Sciatic nerve (tissue), 2 donors: ENCODE measurements at regions of chr2 and their contacts with region 1.

Region 1: DNA sequence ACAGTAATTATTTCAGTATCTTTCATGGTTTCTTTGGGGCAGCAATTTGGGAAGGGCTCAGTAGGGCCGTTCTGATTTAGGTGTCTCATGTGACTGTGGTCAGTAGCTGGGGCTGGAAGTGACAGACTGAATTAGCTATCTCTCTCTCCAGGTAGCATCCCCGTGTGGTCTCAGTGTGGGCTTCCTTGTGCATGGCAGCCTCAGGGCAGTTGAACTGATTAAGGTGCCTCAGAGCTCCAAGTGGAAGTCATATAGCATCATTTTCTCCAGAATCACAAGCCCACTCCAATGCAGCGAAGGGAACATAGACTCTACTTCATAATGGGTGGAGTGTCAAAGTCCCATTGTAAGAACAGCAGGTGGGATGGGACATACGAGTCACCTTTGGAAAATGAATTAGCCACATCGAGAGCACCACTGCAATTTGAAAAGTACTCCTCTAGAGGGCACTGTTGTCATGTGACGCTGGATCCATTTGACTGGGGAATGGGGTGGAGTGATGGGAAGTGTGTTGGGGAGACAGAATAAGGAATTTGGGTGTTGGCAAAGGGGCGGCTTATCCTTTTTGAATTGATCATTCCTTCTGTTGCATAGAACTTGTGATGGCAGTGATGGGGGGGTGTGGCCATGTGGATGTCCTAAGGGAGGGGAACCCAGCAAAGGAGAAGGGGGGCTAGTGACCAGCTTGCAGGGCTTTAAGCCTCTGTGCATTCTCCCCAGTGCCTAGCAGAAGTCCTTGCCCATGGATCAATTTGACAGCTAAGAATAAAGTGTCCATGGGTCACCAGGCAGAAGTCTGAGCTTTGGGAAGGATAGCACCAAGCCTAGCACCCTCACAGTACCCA is 39.3 kb upstream of the FAM136A start:
- DNase-seq: no peak
- ATAC-seq: peak; percentile 42

Region 2: DNA sequence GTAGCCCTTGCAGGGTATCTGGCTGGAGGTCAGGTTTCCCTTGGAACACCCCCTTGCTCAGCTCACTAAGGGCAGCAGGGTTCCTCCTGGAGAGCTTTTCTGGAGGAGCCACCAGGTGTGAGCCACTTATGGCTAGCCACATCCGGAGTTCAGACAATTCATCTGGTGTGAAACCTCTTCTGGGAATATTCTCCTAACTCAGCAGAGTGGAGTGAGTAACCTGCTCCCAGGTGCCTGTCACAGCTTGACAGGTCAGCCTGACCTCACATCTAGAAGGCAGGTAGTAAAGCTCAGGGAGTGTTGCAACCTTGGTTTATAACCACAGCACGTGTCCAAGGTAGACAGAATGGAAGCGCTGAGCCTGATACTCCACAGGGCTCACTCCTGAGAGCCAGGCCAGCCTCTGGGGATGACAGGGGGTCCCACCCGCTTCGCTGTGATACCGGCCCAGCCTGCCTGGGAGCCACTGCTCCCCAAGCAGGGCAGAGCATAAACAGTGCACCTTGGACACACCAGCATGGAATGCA is 275.1 kb after region 1 on chr2:
- intact Hi-C with region 1: loop called (anchors 10 kb)
- DNase-seq: no peak
- ATAC-seq: no peak